ENCODE measurements at regions of chr15 and their contacts with region 1.

Region 1: DNA sequence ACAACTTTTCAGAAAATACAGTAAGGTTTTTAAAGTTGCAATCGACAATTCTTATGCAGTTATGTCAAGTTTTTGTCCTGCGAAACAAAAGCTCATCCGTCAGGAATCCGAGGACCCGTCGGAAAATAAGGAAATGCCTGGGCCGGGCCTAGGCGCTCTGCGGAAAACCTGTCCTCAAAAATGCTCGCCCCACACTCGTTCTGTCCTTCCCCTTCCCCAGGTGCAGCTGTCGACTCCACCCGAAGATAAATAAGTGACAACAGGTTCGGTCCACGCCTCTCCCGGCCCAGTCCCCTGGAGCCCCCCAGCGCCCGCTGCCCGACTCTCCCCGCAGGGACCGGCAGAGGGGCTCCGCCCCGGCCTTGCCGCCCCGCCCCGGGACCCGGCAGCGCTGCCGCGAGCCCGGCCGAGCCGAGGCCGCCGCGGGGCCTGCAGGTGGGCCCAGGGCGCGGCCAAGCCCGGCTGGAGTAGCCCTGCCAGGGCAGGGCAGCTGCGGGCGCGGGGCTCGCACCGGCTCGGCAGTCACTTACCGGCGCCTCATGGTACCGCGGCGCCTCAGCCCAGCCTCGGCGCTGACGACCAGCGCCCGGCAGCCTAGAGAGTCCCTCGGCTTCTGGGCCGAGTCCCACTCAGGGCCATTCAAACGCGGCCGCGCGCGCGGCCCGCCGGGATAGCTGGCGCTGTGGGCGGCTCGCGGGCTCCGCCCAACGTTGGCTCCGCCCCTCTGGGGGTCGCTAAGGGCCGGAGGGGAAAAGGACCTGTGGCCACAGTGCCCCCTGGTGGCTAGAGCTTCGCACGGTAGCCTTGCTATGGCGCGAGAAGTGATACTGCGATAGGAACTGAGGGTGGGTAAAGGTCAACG is at the start of gene KATNBL1:
- DNase-seq: peak; percentile 99
- H3K4me3 ChIP-seq: peak within 1 kb of the TSS; percentile 56 to 85 (median 60)
- H3K27ac ChIP-seq: peak within 1 kb of the TSS; percentile 66 to 92 (median 88)
- H3K4me1 ChIP-seq: peaks cover 9 to 28% (median 24%) of the 10 kb centered on the region in 6 donors
- H3K27me3 ChIP-seq: no peaks in the 10 kb centered on the region
- CTCF ChIP-seq: peak; percentile 90 to 99 (median 97)
- POLR2A ChIP-seq: peak in 1 of 3 donors; percentile 82
- total RNA-seq, gene KATNBL1: 40.2 to 86.3 (median 52.4) TPM

Region 2: DNA sequence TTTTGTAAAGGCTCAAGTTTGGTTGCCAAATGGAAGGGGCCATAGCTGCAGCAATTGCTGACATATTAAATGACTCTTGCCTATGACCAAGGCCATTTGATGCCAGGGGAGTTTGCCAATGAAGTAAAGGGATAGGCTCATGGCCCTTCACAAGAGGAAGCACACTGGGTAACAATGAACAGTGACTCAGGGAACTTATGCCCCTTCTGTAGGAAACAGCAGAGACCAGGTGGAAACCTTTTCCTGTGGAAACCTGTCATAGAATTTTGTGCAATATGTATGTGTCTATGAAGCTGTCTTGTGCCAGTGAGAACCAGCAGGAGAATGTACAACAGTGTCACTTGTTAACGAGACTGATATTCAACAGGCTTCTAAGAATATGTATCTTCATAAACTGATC is 145.2 kb before region 1 on chr15:
- intact Hi-C with region 1: loop called (anchors 5 kb)
- DNase-seq: no peak
- H3K4me3 ChIP-seq: no peak overlapping the region
- H3K27ac ChIP-seq: no peak overlapping the region
- H3K4me1 ChIP-seq: peaks cover 0 to 7% (median 5%) of the 10 kb centered on the region in 6 donors
- H3K27me3 ChIP-seq: no peaks in the 10 kb centered on the region
- CTCF ChIP-seq: no peak
- POLR2A ChIP-seq: no peak

Region 3: DNA sequence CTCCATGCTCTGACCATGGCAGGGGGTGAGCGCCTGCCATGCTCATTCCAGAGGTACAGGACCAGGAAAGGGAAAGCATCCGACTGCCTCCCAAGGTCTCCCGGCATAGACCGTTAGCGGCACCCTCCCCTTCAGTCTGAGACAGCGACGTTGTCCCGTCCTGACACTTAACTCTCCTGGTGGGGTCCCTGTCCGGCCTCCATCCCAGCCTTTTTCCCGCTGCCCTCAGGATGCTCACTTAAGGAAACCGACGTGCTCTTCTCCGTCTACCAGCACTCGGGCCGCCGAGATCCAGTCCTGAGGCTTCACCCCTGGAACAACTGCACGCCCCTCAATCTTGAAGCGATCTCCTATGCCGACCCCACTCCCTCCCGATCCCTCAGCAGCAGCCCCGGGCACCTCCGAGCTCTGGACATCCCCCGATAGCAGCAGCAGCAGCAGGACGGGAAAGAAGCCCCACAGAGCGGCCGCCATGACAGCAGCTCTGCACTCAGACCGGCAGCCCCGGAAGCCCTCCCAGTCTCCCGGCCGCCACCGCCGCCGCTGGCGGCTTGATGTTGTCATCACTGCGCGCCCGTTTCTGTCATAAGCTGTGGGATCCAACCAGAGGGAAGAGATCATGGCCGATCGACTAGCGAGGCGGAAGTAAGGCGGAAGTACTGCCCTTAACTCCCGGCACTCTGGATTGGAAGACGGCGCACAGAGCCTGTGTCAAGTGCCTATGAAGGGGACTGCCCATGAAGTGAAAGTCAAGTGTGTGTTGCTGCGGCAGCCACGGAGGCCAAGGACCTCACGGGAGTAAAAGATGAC is 108.1 kb before region 1 on chr15 and contains the starts of genes EMC7 and PGBD4:
- intact Hi-C with region 1: loop called (anchors 5 kb)
- DNase-seq: peak; percentile 99
- H3K4me3 ChIP-seq: peak within 1 kb of the TSS; percentile 70 to 94 (median 86)
- H3K27ac ChIP-seq: peak within 1 kb of the TSS; percentile 85 to 94 (median 89)
- H3K4me1 ChIP-seq: peaks cover 15 to 53% (median 39%) of the 10 kb centered on the region in 6 donors
- H3K27me3 ChIP-seq: no peaks in the 10 kb centered on the region
- CTCF ChIP-seq: peak in 2 of 11 experiments; percentile 31 to 37
- POLR2A ChIP-seq: peak in 2 of 3 donors; percentile 19 to 85
- total RNA-seq, gene EMC7: 27.1 to 44.6 (median 39.4) TPM
- total RNA-seq, gene PGBD4: 1.4 to 3.1 (median 2.2) TPM